Activated naive CD4-positive, alpha-beta T cell treated with anti-CD3 and anti-CD28 coated beads for 36 hours (primary cell): ENCODE measurements at regions of chr3 and their contacts with region 1.

Region 1: DNA sequence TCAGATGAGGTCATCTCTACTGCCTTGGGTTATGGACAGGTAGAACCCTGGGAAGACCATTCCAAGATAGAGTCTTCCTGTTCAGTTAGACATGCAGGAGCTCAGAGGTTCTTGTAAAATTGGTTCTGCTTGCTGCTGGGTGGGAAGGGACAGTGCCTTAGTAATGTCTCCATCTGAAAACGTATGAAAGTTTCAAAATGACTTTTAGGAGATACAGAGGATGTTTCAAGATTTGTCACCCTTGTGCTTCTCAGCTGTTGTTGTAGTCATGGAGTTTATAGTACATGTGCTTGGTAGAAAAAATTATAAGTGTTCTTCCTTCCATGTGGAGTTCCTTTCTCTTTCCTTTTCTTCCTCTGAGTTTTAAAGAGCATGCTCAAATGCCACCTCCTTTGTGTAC is 885.2 kb upstream of the CFAP20DC start:
- DNase-seq: peak; percentile 53
- H3K4me3 Mint-ChIP-seq: peak overlapping the region; percentile 50
- H3K27ac Mint-ChIP-seq: peak overlapping the region; percentile 78
- H3K4me1 Mint-ChIP-seq: peaks cover 89% of the 10 kb centered on the region
- H3K27me3 Mint-ChIP-seq: no peaks in the 10 kb centered on the region

Region 2: DNA sequence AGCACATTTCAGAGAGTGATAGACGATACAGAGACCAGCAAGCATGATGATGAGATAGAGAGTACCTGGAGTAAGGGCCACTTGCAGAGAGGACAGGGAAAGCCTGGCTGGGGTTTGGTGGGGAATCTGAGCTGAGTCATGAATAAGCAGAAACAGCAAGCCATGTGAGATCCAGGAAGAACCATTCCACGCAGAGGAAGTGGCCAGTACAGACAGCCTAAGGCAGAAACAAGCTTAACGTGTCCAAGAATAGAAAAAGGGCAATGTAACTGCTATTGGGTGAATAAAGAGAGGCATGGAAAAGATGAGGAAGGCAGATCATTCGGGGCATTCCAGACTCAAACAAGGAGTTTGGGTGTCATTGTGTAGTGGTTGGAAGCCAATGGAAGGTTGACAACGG is 68.9 kb before region 1 on chr3:
- CTCF ChIA-PET with region 1: interaction called, 3 read pairs
- intact Hi-C with region 1: loop called (anchors 1 kb)
- DNase-seq: no peak
- H3K4me3 Mint-ChIP-seq: no peak overlapping the region
- H3K27ac Mint-ChIP-seq: no peak overlapping the region
- H3K4me1 Mint-ChIP-seq: peaks cover 59% of the 10 kb centered on the region
- H3K27me3 Mint-ChIP-seq: no peaks in the 10 kb centered on the region

Region 3: DNA sequence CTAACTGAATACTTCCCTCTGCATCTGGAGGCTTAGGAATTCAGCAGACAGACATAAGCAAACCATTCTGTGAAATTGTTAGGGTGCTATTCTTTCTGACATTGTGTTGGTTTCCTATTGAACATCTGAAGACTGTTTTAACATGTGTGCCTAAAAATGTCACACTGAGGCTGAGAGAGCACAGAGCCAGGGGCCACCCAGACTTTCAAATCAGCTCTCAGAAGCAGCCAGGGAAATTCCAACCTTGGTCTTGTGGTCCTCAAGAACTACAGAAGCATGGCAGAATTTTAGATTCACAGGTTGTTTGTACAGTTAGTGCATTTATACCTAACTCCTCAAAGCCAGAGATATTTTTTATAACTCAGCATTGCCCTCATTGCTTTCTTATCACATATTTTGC is 44.0 kb after region 1 on chr3:
- CTCF ChIA-PET with region 1: interaction called, 6 read pairs
- intact Hi-C with region 1: loop called (anchors 1 kb)
- DNase-seq: peak; percentile 75
- H3K4me3 Mint-ChIP-seq: peak overlapping the region; percentile 39
- H3K27ac Mint-ChIP-seq: peak overlapping the region; percentile 94
- H3K4me1 Mint-ChIP-seq: peaks cover 83% of the 10 kb centered on the region
- H3K27me3 Mint-ChIP-seq: no peaks in the 10 kb centered on the region

Region 4: DNA sequence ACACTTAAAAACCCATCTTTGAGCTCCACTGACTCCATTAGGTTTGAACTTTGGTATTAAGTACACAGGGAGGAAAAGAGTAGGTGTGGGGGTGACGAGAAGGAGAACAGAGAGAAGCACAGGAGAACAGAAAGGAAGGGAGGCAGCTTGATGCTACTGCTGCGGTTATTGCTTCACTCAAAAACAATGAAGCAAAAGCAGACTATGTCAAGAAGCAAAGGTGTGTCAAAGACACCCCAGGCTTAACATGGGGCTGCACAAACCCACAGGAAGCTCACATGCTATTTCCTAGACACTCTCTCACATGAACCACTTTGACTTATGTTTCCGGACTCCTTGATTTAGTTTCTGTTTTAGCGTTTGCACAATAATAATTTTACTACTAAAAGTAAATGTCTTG is 75.8 kb after region 1 on chr3:
- CTCF ChIA-PET with region 1: interaction called, 5 read pairs
- intact Hi-C with region 1: loop called (anchors 1 kb)
- DNase-seq: peak; percentile 80
- H3K4me3 Mint-ChIP-seq: peak overlapping the region; percentile 75
- H3K27ac Mint-ChIP-seq: peak overlapping the region; percentile 97
- H3K4me1 Mint-ChIP-seq: peaks cover 87% of the 10 kb centered on the region
- H3K27me3 Mint-ChIP-seq: no peaks in the 10 kb centered on the region

Region 5: DNA sequence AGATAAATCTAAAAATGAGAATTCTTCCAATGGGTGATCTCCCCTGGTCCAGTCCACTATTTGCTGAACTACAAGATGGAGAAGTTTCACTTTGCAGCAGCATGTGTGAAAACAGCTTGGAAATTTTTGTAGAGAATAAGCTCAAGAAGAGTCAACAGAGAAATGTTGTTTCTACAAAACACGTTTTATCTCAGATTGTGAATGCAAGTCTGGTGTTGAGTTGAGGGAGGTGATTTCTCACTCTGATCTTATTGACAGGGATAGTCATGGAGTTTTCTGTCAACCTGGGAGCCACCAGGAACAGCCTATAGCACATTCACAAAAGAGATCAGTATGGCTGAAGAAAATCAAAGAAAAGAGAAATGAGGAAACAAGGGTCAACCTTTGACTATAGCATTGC is 96.0 kb after region 1 on chr3:
- CTCF ChIA-PET with region 1: no interaction called
- intact Hi-C with region 1: loop called (anchors 1 kb)
- DNase-seq: no peak
- H3K4me3 Mint-ChIP-seq: peak overlapping the region; percentile 6
- H3K27ac Mint-ChIP-seq: peak overlapping the region; percentile 90
- H3K4me1 Mint-ChIP-seq: peaks cover 77% of the 10 kb centered on the region
- H3K27me3 Mint-ChIP-seq: no peaks in the 10 kb centered on the region